ENCODE measurements at regions of chr11 and their contacts with region 1.

Region 1: DNA sequence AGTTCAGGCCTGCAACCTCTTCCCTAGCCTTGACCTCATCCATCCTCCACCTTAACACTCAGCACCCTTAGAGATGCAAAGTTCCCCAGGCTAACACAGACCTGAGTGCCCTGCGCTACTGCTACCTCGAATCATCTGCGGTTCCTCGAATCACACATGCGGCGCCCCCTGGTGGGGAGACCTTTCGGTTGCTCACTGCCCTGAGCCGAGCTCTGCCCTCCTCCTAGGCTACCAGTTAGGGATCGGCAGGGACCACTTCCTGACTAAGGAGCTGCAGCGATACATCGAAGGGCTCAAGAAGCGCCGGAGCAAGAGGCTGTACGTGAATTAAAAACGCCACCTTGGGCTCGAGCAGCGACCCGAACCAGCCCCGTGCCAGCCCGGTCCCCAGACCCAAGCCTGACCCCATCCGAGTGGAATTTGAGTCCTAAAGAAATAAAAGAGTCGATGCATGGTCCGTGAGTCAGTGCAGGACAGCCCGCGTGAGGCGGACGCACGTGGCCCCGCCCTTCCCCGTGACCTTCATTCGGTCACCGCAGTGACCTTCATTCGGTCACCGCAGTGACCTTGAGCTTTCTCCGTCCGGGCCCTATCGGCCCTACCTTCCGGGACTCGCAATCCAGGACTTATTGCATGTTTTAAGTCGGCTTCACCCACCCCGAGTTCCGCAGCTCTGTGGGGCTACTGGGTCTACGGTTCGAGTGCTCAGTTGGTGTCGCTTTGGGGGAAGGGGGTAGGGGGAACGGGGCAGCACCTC is 830 bp upstream of the ESRRA start:
- DNase-seq: peak; percentile 87 to 90 (median 88)
- H3K4me3 ChIP-seq: peak overlapping the region; percentile 64
- H3K4me3 Mint-ChIP-seq: peak overlapping the region; percentile 88 to 97 (median 94)
- H3K27ac ChIP-seq: peak overlapping the region; percentile 90
- H3K27ac Mint-ChIP-seq: peak overlapping the region; percentile 91 to 99 (median 96)
- H3K4me1 ChIP-seq: peaks cover 41% of the 10 kb centered on the region
- H3K4me1 Mint-ChIP-seq: peaks cover 20 to 48% (median 31%) of the 10 kb centered on the region in 4 donors
- H3K27me3 ChIP-seq: peaks cover 20% of the 10 kb centered on the region
- H3K27me3 Mint-ChIP-seq: peaks cover 10 to 12% of the 10 kb centered on the region in 2 donors

Region 2: GRCh38 chr11:64185816-64186498 is 118.5 kb before region 1 on chr11 and contains the start of gene STIP1:
- CTCF ChIA-PET with region 1: interaction called, 45 read pairs
- POLR2A ChIA-PET with region 1: interaction called, 27 read pairs
- intact Hi-C with region 1: loop called (anchors 1 kb)
- DNase-seq: peak; percentile 99 to 100 (median 99)
- H3K4me3 ChIP-seq: peak within 1 kb of the TSS; percentile 64 to 71
- H3K4me3 Mint-ChIP-seq: peak within 1 kb of the TSS; percentile 95 to 99 (median 97)
- H3K27ac ChIP-seq: peak within 1 kb of the TSS; percentile 79
- H3K27ac Mint-ChIP-seq: peak within 1 kb of the TSS; percentile 91 to 98 (median 97)
- H3K4me1 ChIP-seq: peaks cover 29% of the 10 kb centered on the region
- H3K4me1 Mint-ChIP-seq: peaks cover 11 to 52% (median 33%) of the 10 kb centered on the region in 4 donors
- H3K27me3 ChIP-seq: no peaks in the 10 kb centered on the region
- H3K27me3 Mint-ChIP-seq: no peaks in the 10 kb centered on the region
- total RNA-seq, gene STIP1: 97.4 to 106 TPM

Region 3: GRCh38 chr11:64225612-64226506 is 78.6 kb before region 1 on chr11 and contains the starts of genes NUDT22 and TRPT1:
- CTCF ChIA-PET with region 1: interaction called, 45 read pairs
- POLR2A ChIA-PET with region 1: interaction called, 21 read pairs
- intact Hi-C with region 1: loop called (anchors 1 kb)
- DNase-seq: peak; percentile 82 to 88 (median 85)
- H3K4me3 ChIP-seq: peak within 1 kb of the TSS; percentile 86 to 94
- H3K4me3 Mint-ChIP-seq: peak within 1 kb of the TSS; percentile 89 to 94 (median 92)
- H3K27ac ChIP-seq: peak within 1 kb of the TSS; percentile 77
- H3K27ac Mint-ChIP-seq: peak within 1 kb of the TSS; percentile 88 to 97 (median 93)
- H3K4me1 ChIP-seq: peaks cover 43% of the 10 kb centered on the region
- H3K4me1 Mint-ChIP-seq: peaks cover 13 to 50% (median 28%) of the 10 kb centered on the region in 4 donors
- H3K27me3 ChIP-seq: no peaks in the 10 kb centered on the region
- H3K27me3 Mint-ChIP-seq: no peaks in the 10 kb centered on the region
- total RNA-seq, gene NUDT22: 83.9 to 101 TPM
- total RNA-seq, gene TRPT1: 37.6 to 42.1 TPM

Region 4: DNA sequence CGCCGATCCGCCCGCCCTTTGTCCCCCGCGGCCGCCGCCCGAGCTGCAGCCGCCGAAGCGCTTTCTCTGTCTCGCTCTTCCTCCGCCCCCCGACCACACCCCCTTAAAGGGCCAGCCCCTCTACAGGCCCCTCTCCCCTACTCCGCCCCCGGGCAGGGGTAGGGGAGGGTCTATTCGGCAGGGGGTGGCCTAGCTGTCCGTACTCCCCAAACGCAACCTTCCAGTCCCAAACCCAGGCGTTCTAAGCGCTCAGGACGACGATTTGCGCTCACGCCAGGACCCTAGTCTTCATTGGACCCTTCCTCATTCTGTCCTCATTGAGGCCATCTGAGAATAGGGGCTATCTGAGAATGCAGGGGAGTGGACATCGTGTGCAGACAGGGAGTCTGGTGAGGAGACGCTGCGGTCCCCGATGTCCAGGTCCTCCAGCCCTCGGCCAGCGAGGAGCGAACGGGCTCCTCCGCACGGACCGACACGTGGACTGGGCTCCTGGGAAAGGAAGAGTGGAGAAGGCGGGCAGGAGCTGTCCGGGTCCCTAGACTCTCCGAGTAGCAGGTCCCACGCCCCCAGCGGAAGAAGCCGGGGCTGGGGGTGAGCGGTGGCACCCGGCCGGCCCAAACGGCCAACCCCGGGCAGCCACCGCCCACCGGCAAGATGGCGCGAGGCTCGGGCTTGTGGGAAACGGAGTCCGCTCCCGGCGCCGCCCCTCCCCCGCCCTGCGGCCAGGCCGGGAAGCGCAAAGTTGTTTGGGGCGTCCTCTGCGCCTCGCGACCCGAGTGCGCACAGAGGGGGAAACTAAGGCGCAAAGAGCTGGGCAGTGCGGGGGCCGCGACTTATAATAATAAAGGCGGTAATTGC is 57.4 kb before region 1 on chr11 and contains the start of gene PPP1R14B:
- CTCF ChIA-PET with region 1: interaction called, 121 read pairs
- POLR2A ChIA-PET with region 1: interaction called, 52 read pairs
- intact Hi-C with region 1: loop called (anchors 1 kb)
- DNase-seq: peak; percentile 72 to 82 (median 74)
- H3K4me3 ChIP-seq: peak within 1 kb of the TSS; percentile 95 to 98
- H3K4me3 Mint-ChIP-seq: peak within 1 kb of the TSS; percentile 83 to 92 (median 88)
- H3K27ac ChIP-seq: peak within 1 kb of the TSS; percentile 63
- H3K27ac Mint-ChIP-seq: peak within 1 kb of the TSS; percentile 77 to 94 (median 92)
- H3K4me1 ChIP-seq: peaks cover 55% of the 10 kb centered on the region
- H3K4me1 Mint-ChIP-seq: peaks cover 10 to 70% (median 32%) of the 10 kb centered on the region in 4 donors
- H3K27me3 ChIP-seq: no peaks in the 10 kb centered on the region
- H3K27me3 Mint-ChIP-seq: no peaks in the 10 kb centered on the region
- total RNA-seq, gene PPP1R14B: 32.2 to 38.4 TPM

Region 5: GRCh38 chr11:64284048-64284961 is 20.2 kb before region 1 on chr11 and contains the start of gene BAD:
- CTCF ChIA-PET with region 1: interaction called, 47 read pairs
- POLR2A ChIA-PET with region 1: interaction called, 81 read pairs
- intact Hi-C with region 1: loop called (anchors 1 kb)
- DNase-seq: peak; percentile 89 to 94 (median 90)
- H3K4me3 ChIP-seq: peak within 1 kb of the TSS; percentile 93 to 96
- H3K4me3 Mint-ChIP-seq: peak within 1 kb of the TSS; percentile 90 to 93 (median 92)
- H3K27ac ChIP-seq: peak within 1 kb of the TSS; percentile 100
- H3K27ac Mint-ChIP-seq: peak within 1 kb of the TSS; percentile 96 to 99 (median 98)
- H3K4me1 ChIP-seq: peaks cover 24% of the 10 kb centered on the region
- H3K4me1 Mint-ChIP-seq: peaks cover 12 to 48% (median 23%) of the 10 kb centered on the region in 4 donors
- H3K27me3 ChIP-seq: no peaks in the 10 kb centered on the region
- H3K27me3 Mint-ChIP-seq: no peaks in the 10 kb centered on the region
- total RNA-seq, gene BAD: 23.1 to 26.2 TPM

Region 6: DNA sequence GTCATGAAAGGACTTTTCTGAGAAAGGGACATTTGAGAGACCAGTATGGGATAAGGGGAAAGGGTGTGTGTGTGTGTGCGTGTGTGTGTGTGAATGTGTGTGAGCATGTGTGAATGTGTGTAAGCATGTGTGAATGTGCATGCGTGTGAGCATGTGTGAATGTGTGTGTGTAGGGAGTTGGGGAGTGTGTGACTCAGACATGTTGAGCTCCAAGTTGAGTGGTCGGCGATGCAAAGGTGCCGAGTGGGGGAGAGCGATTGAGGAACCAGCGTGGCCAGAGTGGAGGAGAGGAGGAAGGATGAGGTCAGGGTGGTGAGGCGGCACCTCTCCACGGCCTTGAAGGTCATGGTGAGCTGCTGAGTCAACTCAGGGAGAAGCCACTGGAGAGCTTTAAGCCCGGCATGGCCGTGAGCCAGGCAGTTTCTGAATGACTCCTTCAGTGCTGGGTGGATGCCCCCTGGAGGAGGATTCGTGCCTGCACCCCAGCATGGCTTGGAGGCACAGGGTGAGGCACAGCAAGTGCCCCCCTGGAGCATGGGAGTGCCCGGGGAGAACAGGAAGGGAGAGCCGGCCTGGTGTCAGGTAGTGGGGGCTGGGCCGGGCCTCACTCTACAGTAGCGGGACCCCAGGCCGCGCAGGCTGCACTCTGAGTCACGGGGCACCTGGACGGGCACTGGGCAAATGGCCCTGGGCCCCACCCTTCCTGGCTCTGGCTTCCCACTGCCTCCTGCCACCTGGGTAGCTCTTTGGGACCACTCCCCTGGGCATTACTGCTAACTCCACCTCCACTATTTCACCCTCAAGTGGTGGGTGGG is 27.3 kb after region 1 on chr11:
- CTCF ChIA-PET with region 1: interaction called, 12 read pairs
- POLR2A ChIA-PET with region 1: interaction called, 10 read pairs
- intact Hi-C with region 1: no loop called
- DNase-seq: peak; percentile 47 to 73 (median 54)
- H3K4me3 ChIP-seq: no peak overlapping the region
- H3K4me3 Mint-ChIP-seq: peak overlapping the region in 4 of 8 donors; percentile 7 to 38 (median 36)
- H3K27ac ChIP-seq: no peak overlapping the region
- H3K27ac Mint-ChIP-seq: peak overlapping the region; percentile 11 to 92 (median 71)
- H3K4me1 ChIP-seq: peaks cover 12% of the 10 kb centered on the region
- H3K4me1 Mint-ChIP-seq: peaks cover 5 to 11% (median 8%) of the 10 kb centered on the region in 4 donors
- H3K27me3 ChIP-seq: no peaks in the 10 kb centered on the region
- H3K27me3 Mint-ChIP-seq: no peaks in the 10 kb centered on the region